Aorta (tissue), 5 donors: ENCODE measurements at regions of chr14 and their contacts with region 1.

Region 1: DNA sequence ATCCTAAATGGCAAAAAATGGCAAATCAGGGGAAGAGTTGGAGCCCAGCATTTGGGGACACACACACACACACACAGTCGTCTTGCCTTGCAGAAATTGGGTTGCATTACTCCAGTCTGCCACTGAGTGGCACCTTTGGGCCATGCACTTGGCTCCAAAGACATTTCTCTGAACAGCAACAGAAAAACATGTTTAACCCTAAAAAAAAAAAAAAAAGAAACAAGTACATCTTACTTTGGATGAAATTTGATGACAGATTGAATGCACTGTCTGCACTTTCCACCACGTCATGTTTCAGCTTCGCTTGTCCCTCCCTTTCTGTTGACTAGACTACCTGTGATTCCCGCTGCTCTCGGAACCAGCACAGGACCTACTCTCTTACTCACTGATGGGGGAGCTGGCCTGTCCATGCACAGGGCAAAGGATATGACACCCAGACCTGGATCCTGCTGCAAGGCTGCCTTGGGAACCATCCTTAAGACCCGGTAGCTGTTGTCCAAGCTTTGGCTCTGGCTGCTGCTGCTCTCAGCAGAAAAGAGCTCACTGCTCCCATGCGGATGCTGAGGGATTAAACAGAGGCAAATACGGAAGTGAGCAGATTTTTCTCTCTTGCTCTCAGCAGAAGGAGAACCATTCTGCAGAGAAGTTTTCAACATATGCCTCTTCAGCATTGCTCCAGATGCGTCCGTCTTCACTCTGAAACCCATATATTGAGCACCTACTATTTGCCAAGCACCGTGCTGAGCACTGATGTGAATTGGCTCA is 376.8 kb downstream of the DPF3 start:
- DNase-seq: peak; percentile 71 to 85
- ATAC-seq: peak; percentile 87
- H3K4me3 ChIP-seq: no peak overlapping the region
- H3K27ac ChIP-seq: no peak overlapping the region
- H3K4me1 ChIP-seq: no peaks in the 10 kb centered on the region
- H3K27me3 ChIP-seq: no peaks in the 10 kb centered on the region

Region 2: DNA sequence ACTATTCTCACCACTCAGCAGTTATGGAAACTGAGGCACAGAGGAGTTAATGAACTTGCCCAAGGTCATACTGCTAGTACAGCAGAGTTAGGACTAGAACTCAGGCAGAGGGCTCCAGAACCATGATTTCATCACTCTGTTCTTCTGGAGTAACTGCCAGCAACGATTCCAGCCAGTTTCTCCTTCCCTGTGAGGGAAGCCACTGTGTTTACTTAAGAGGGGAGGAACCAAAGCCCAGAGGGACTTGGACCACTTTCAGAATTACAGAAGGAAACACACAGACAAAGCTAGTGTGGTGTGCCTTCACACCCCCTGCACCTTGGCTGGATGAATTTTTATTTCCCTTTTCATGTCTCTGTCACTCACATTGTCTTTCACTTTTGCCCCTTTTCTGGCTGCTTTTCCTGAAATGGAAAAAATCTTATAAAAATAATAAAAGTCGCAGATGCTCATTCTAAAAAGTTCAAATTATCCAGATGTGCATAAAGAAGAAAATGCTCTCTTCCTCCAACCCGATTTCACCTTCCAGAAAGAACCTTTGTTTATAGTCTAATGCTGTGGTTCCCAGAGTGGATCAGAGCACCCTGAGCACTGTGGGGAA is 21.4 kb before region 1 on chr14:
- intact Hi-C with region 1: no loop called
- DNase-seq: no peak
- ATAC-seq: peak; percentile 48
- H3K4me3 ChIP-seq: no peak overlapping the region
- H3K27ac ChIP-seq: no peak overlapping the region
- H3K4me1 ChIP-seq: peaks cover 0 to 3% of the 10 kb centered on the region in 2 donors
- H3K27me3 ChIP-seq: no peaks in the 10 kb centered on the region

Region 3: DNA sequence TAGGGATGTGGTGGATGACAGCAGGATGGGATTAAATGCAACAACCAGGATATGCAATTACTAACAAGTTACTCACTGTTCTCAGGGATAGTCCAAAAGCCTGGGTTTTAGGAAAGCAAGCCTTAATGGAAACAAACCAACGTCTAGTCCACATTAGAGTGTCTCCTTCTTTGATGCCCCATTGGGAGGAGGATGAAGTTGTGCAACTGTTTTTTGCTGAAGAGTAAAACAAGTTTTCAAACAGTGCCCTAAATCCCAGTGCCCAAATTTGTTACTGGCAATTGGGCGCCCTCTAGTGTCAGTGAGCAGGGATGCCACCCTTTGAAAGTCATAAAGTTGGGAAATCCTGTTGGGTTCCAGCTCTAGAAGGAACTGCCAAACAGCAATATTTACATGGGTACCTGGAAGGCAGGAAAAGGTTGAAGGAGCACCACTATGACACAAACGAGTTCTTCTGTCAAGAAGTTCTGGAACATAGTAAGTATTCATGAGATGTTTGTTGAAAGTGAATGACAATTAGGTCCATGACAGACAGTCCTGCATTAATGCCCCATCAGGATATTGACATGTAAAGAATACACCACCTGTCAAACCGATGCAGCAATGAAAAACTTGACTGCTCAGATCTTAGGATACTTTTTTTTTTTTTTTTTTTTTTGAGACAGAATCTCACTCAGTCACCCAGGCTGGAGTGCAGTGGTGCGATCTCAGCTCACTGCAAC is 387.9 kb after region 1 on chr14:
- intact Hi-C with region 1: loop called (anchors 1 kb)
- DNase-seq: peak in 1 of 2 donors; percentile 65
- ATAC-seq: peak; percentile 83
- H3K4me3 ChIP-seq: no peak overlapping the region
- H3K27ac ChIP-seq: peak overlapping the region in 1 of 2 donors; percentile 29
- H3K4me1 ChIP-seq: peaks cover 0 to 6% of the 10 kb centered on the region in 2 donors
- H3K27me3 ChIP-seq: no peaks in the 10 kb centered on the region

Region 4: GRCh38 chr14:72948481-72949138 is 431.5 kb after region 1 on chr14:
- intact Hi-C with region 1: loop called (anchors 1 to 2 kb)
- DNase-seq: peak; percentile 77 to 91
- ATAC-seq: no peak
- H3K4me3 ChIP-seq: no peak overlapping the region
- H3K27ac ChIP-seq: no peak overlapping the region
- H3K4me1 ChIP-seq: no peaks in the 10 kb centered on the region
- H3K27me3 ChIP-seq: no peaks in the 10 kb centered on the region